ENCODE measurements at regions of chr17 and their contacts with region 1.

Region 1: GRCh38 chr17:28018439-28019070 is 23.9 kb upstream of the NLK start:
- DNase-seq: peak; percentile 66
- ATAC-seq: peak; percentile 18; the same call in 1 of the 2 replicates
- H3K4me3 ChIP-seq: no peak overlapping the region
- H3K27ac ChIP-seq: no peak overlapping the region
- H3K4me1 ChIP-seq: no peaks in the 10 kb centered on the region
- H3K27me3 ChIP-seq: no peaks in the 10 kb centered on the region
- CTCF ChIP-seq: no peak

Region 2: GRCh38 chr17:27892866-27893769 is 125.4 kb before region 1 on chr17 and contains the start of gene LYRM9:
- CTCF ChIA-PET with region 1: no interaction called
- POLR2A ChIA-PET with region 1: no interaction called
- intact Hi-C with region 1: loop called (anchors 10 kb)
- DNase-seq: peak; percentile 83
- ATAC-seq: peak; percentile 99
- H3K4me3 ChIP-seq: peak within 1 kb of the TSS; percentile 70
- H3K27ac ChIP-seq: no peak within 1 kb of the TSS
- H3K4me1 ChIP-seq: peaks cover 4% of the 10 kb centered on the region
- H3K27me3 ChIP-seq: no peaks in the 10 kb centered on the region
- CTCF ChIP-seq: peak; percentile 72
- total RNA-seq, gene LYRM9: 0.52 and 0.58 TPM in 2 replicates

Region 3: DNA sequence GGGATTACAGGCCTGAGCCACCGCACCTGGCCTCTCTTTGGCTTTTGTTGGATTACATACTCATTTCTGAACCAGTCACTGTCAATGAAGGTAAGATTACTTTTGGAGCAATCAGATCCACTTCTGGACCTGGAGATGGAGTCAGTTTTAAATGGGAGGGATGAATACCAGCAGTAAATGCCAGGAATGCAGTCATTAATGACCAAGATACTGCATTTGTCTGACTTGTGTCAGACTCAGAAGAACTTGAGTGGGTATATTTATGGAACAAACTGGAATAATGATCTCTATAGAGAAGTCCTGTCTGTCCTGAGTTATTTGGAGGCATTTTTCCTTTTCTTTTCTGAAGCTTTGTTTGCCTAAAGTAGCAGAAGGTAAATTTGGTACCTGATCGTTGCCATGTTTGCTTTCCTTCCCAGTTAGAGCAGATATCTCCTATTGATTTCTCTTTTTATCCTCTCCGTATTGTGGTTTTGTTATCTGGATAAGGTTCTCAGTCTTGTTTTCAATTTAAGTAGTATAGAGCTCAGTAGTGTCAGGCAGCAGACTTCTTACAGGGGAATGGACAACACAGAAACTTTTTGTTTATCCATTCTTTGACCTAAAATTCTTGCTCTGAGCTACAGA is 34.6 kb after region 1 on chr17:
- CTCF ChIA-PET with region 1: no interaction called
- POLR2A ChIA-PET with region 1: no interaction called
- intact Hi-C with region 1: no loop called
- DNase-seq: no peak
- ATAC-seq: no peak
- H3K4me3 ChIP-seq: no peak overlapping the region
- H3K27ac ChIP-seq: no peak overlapping the region
- H3K4me1 ChIP-seq: peaks cover 10% of the 10 kb centered on the region
- H3K27me3 ChIP-seq: no peaks in the 10 kb centered on the region
- CTCF ChIP-seq: no peak